ENCODE measurements at regions of chr11 and their contacts with region 1.

Region 1: GRCh38 chr11:133821776-133822175 is 23.5 kb downstream of the SPATA19 start:
- DNase-seq: peak; percentile 78
- CTCF ChIP-seq: peak; percentile 84

Region 2: DNA sequence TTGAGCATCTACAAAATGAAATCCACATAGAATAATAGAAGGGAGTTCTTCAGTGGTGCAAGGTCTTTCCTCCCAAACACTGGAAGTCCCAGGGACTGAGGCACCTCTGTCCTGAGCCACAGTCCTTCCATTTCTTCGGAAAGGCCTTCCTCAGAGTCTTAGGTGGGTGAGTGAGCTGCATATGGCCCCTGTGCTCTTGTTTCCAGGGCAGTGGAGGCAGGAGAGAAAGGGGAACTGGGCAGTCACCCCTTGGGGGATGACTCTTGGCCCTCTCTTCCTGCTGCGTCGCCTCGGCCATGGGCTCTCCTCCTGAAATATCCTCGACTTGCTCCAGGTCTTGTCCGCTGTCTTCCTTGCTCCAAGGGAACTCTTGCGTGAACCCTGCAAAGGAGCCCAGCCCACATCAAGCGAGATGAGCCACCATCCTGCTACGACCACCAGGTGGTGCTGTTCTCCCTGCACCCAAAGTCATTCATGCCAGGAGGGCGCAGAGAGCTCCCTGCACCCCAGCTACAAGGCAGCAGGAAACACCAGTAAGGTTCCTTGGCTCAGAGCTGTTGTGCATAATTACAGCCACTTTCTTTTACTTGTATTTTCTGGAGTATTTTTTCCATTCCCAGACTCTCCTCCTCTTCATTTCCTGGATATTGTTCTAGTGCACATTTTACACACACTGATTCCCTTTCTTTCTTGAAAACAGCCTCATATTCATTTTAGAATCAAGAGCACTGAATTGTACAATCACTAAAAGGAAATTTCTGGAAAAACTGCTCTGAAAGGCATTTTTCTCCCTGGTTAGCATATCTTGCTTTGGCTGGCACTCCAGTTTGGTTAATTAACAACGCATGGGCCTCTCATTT is 687.2 kb before region 1 on chr11:
- in situ Hi-C with region 1: loop called (anchors 25 kb)
- DNase-seq: peak; percentile 61
- CTCF ChIP-seq: peak; percentile 91

Measured in GM13977 (cell line).